CD14-positive monocyte (primary cell): ENCODE measurements at regions of chr9 and their contacts with region 1.

Region 1: DNA sequence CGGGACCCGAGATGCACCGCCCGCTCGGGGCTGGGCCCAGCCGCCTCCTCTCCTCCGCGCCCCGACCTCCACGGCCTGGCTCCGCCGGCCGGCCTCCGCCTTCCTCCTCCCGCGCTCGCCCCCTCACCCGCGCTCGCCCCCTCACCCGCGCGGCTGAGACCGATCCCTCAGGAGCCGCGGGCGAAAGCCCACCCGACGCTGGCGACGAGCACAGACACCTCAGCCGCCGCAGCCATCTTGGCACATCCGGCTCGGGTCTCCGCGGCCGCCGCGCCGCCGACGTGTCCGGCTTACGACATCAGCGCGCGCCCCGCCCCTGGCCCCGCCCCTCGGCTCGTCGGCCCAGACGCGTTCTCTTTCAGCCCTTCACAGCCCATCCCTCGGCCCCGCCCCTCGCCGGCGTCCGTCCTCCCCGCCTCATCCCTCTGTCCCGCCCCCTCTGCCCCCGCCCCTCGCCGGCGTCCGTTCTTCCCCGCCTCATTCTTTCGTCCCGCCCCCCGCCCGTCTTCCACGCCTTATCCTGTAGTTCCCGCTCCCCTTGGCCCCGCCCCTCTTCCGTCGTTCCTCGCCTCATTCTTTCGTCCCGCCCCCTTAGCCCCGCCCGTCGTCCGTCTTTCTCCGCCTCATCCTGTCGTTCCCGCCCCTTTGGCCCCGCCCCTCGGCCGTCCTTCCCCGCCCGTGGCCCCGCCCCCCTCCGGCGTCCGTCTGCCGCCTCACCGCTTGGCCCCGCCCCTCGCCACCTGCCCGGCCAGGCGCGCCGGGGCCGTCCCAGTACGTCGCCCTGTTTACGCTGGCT is at the start of gene SEC16A:
- DNase-seq: peak; percentile 96 to 99 (median 99)
- H3K4me3 ChIP-seq: peak within 1 kb of the TSS; percentile 75 to 93 (median 92)
- H3K4me3 Mint-ChIP-seq: peak within 1 kb of the TSS; percentile 92 to 96
- H3K27ac ChIP-seq: peak within 1 kb of the TSS; percentile 98
- H3K27ac Mint-ChIP-seq: peak within 1 kb of the TSS; percentile 97 to 99 (median 99)
- H3K4me1 ChIP-seq: peaks cover 26 to 39% of the 10 kb centered on the region in 2 donors
- H3K4me1 Mint-ChIP-seq: peaks cover 15% of the 10 kb centered on the region
- H3K27me3 ChIP-seq: peaks cover 0 to 2% of the 10 kb centered on the region in 2 donors
- H3K27me3 Mint-ChIP-seq: peaks cover 0 to 7% (median 6%) of the 10 kb centered on the region in 3 donors
- CTCF ChIP-seq: no peak
- polyA plus RNA-seq, gene SEC16A: 11.1 to 36.8 (median 19.1) TPM

Region 2: DNA sequence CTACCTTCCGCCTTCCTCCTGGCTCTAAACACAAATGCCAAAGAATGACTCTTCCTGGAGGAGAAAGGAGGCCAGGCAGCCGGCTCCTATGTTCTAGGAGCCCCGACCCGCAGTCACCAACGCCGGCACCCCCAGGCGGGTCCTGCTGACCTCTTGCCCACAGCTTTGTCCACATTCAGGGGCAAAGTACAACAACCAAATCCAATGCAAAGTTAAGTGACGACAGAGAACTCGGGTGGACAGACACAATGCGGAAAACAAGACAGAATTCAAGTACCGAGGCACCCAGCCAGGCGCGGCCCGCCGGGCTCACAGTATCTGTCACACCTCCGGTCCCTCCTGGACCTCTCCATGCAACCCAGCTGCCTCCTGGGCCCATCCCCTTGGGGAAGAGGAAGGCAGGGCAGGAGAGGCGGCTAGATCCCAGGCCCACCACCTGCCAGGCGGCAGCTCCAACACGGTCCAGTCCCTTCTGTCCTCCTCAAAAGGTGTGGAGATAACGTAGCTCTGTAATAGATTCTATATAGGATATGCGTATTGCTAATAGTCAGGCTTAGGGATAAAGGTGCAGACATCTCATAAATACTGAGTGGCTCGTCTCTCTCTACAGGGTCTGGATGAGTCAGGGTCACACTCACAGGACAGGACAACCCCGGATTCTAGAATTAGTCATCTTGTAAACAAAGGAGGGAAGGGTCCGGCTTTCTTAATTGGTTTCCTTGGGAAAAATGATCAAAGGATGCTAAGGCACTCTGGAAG is 474.9 kb before region 1 on chr9:
- intact Hi-C with region 1: no loop called
- DNase-seq: no peak
- H3K4me3 ChIP-seq: no peak overlapping the region
- H3K4me3 Mint-ChIP-seq: no peak overlapping the region
- H3K27ac ChIP-seq: no peak overlapping the region
- H3K27ac Mint-ChIP-seq: peak overlapping the region in 3 of 7 donors; percentile 8 to 71 (median 15)
- H3K4me1 ChIP-seq: peaks cover 0 to 4% of the 10 kb centered on the region in 2 donors
- H3K4me1 Mint-ChIP-seq: peaks cover 6% of the 10 kb centered on the region
- H3K27me3 ChIP-seq: no peaks in the 10 kb centered on the region
- H3K27me3 Mint-ChIP-seq: peaks cover 0 to 2% (median 0%) of the 10 kb centered on the region in 3 donors
- CTCF ChIP-seq: no peak

Region 3: GRCh38 chr9:136363606-136364370 is 119.2 kb before region 1 on chr9 and contains the start of gene DNLZ:
- intact Hi-C with region 1: loop called in 1 of 2 experiments (anchors 10 kb)
- DNase-seq: peak; percentile 79 to 89 (median 88)
- H3K4me3 ChIP-seq: peak within 1 kb of the TSS; percentile 64 to 86 (median 65)
- H3K4me3 Mint-ChIP-seq: peak within 1 kb of the TSS; percentile 86 to 89
- H3K27ac ChIP-seq: peak within 1 kb of the TSS; percentile 26 to 64
- H3K27ac Mint-ChIP-seq: peak within 1 kb of the TSS in 6 of 7 donors; percentile 73 to 93 (median 90)
- H3K4me1 ChIP-seq: peaks cover 35 to 42% of the 10 kb centered on the region in 2 donors
- H3K4me1 Mint-ChIP-seq: peaks cover 24% of the 10 kb centered on the region
- H3K27me3 ChIP-seq: no peaks in the 10 kb centered on the region
- H3K27me3 Mint-ChIP-seq: peaks cover 1 to 2% (median 2%) of the 10 kb centered on the region in 3 donors
- CTCF ChIP-seq: peak; percentile 100
- polyA plus RNA-seq, gene DNLZ: 5.1 to 20.5 (median 10.5) TPM

Region 4: GRCh38 chr9:136521537-136521936 is 38.5 kb after region 1 on chr9:
- intact Hi-C with region 1: no loop called
- DNase-seq: peak; percentile 96 to 98 (median 98)
- H3K4me3 ChIP-seq: peak overlapping the region in 1 of 3 experiments; percentile 19
- H3K4me3 Mint-ChIP-seq: peak overlapping the region; percentile 52 to 75
- H3K27ac ChIP-seq: peak overlapping the region; percentile 86 to 99
- H3K27ac Mint-ChIP-seq: peak overlapping the region; percentile 93 to 97 (median 95)
- H3K4me1 ChIP-seq: peaks cover 30 to 34% of the 10 kb centered on the region in 2 donors
- H3K4me1 Mint-ChIP-seq: peaks cover 21% of the 10 kb centered on the region
- H3K27me3 ChIP-seq: no peaks in the 10 kb centered on the region
- H3K27me3 Mint-ChIP-seq: peaks cover 0 to 4% (median 2%) of the 10 kb centered on the region in 3 donors
- CTCF ChIP-seq: no peak

Region 5: DNA sequence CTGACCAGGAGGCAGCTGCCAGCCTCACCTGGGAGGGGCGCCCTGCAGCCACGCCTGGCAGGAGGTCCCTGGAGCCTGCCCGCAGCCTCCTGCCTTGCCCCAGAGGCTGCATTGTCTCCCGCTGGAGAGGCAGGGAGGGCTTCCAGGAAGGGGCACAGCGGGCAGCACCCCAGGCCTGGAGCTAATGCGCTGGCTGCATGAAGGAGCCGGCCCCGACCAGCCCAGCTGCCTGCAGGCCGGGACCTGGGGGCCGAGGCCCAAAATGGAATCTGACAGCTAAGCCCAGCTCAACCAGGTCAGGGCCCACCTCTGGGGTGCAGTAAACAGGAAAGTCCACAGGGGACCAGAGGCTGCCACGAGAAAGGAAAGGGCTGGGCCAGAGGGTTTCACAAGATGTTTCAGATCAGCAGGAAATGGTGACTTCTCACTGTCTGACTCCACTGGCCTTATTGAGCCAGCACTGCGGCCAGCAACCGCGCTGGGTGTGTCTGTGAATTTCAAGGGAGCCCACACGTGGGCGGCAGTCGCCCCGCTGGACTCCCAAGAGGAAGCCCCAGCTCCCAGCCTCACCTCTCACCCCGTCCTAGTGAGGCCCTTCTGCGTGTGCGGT is 81.5 kb after region 1 on chr9:
- intact Hi-C with region 1: loop called in 1 of 2 experiments (anchors 5 kb)
- DNase-seq: peak; percentile 95 to 99 (median 97)
- H3K4me3 ChIP-seq: peak overlapping the region in 1 of 3 experiments; percentile 50
- H3K4me3 Mint-ChIP-seq: peak overlapping the region in 1 of 2 donors; percentile 30
- H3K27ac ChIP-seq: peak overlapping the region; percentile 83 to 91
- H3K27ac Mint-ChIP-seq: peak overlapping the region; percentile 81 to 93 (median 89)
- H3K4me1 ChIP-seq: peaks cover 62 to 68% of the 10 kb centered on the region in 2 donors
- H3K4me1 Mint-ChIP-seq: peaks cover 53% of the 10 kb centered on the region
- H3K27me3 ChIP-seq: no peaks in the 10 kb centered on the region
- H3K27me3 Mint-ChIP-seq: peaks cover 0 to 2% (median 0%) of the 10 kb centered on the region in 3 donors
- CTCF ChIP-seq: peak; percentile 70

Region 6: GRCh38 chr9:136686794-136687711 is 204.1 kb after region 1 on chr9 and contains the start of gene AGPAT2:
- intact Hi-C with region 1: loop called in 1 of 2 experiments (anchors 5 kb)
- DNase-seq: peak; percentile 74 to 80 (median 78)
- H3K4me3 ChIP-seq: peak within 1 kb of the TSS; percentile 78 to 97 (median 97)
- H3K4me3 Mint-ChIP-seq: peak within 1 kb of the TSS; percentile 93 to 98
- H3K27ac ChIP-seq: peak within 1 kb of the TSS; percentile 89 to 92
- H3K27ac Mint-ChIP-seq: peak within 1 kb of the TSS; percentile 88 to 96 (median 93)
- H3K4me1 ChIP-seq: peaks cover 24 to 39% of the 10 kb centered on the region in 2 donors
- H3K4me1 Mint-ChIP-seq: peaks cover 28% of the 10 kb centered on the region
- H3K27me3 ChIP-seq: no peaks in the 10 kb centered on the region
- H3K27me3 Mint-ChIP-seq: peaks cover 0 to 3% (median 0%) of the 10 kb centered on the region in 3 donors
- CTCF ChIP-seq: no peak
- polyA plus RNA-seq, gene AGPAT2: 80.1 to 139 (median 116) TPM

Region 7: DNA sequence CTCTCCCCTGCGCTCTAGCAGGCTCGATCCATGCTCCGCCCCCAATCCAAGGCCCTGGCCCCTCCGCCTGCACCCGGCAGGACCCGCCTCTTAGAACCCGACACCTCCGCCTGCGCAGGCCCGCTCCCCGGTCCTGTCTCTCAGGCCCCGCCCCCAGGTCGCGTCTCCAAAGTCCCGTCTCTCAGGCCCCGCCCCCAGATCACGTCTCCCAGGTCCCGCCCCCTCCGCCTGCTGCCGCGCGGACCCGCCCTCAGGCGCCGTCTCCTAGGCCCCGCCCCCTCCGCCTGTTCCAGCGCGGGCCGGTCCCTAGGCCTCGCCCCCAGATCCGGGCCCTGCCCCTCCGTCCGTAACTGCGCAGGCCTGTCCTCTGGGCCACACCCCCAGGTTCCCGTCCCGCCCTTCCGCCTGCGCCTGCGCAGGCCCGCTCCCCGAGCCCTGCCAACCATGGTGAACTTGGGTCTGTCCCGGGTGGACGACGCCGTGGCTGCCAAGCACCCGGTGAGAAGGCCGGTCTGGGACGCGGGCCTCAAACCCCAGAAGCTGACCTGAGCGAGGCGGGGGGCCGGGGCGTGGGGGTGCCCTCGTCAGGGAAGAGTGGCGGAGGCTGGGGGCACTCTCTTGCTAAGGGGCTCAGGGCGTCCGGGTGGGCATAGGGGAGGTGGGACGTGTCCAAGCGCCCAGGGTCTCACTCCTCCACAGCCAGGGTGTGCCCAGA is 308.1 kb after region 1 on chr9 and contains the start of gene TMEM141:
- intact Hi-C with region 1: loop called in 1 of 2 experiments (anchors 2 kb)
- DNase-seq: peak; percentile 97 to 99 (median 99)
- H3K4me3 ChIP-seq: peak within 1 kb of the TSS; percentile 50 to 81 (median 55)
- H3K4me3 Mint-ChIP-seq: peak within 1 kb of the TSS; percentile 75 to 86
- H3K27ac ChIP-seq: peak within 1 kb of the TSS; percentile 81 to 82
- H3K27ac Mint-ChIP-seq: peak within 1 kb of the TSS; percentile 83 to 96 (median 93)
- H3K4me1 ChIP-seq: peaks cover 29 to 35% of the 10 kb centered on the region in 2 donors
- H3K4me1 Mint-ChIP-seq: peaks cover 25% of the 10 kb centered on the region
- H3K27me3 ChIP-seq: peaks cover 0 to 7% of the 10 kb centered on the region in 2 donors
- H3K27me3 Mint-ChIP-seq: peaks cover 5 to 17% (median 9%) of the 10 kb centered on the region in 3 donors
- CTCF ChIP-seq: no peak
- polyA plus RNA-seq, gene TMEM141: 33.1 to 47.2 (median 39.2) TPM